CD8-positive, alpha-beta memory T cell (primary cell): ENCODE measurements at regions of chr10 and their contacts with region 1.

Region 1: GRCh38 chr10:87850742-87851205 is 12.6 kb downstream of the KLLN start:
- DNase-seq: peak; percentile 11 to 63 (median 43)
- H3K4me3 ChIP-seq: no peak overlapping the region
- H3K4me3 Mint-ChIP-seq: no peak overlapping the region
- H3K27ac ChIP-seq: no peak overlapping the region
- H3K27ac Mint-ChIP-seq: no peak overlapping the region
- H3K4me1 ChIP-seq: no peaks in the 10 kb centered on the region
- H3K4me1 Mint-ChIP-seq: peaks cover 5 to 12% (median 10%) of the 10 kb centered on the region in 3 donors
- H3K27me3 ChIP-seq: no peaks in the 10 kb centered on the region
- H3K27me3 Mint-ChIP-seq: peaks cover 0 to 3% of the 10 kb centered on the region in 2 donors

Region 2: GRCh38 chr10:88386821-88387773 is 536.3 kb after region 1 on chr10:
- CTCF ChIA-PET with region 1: interaction called, 25 read pairs
- POLR2A ChIA-PET with region 1: no interaction called
- DNase-seq: peak in 1 of 5 donors; percentile 53
- H3K4me3 ChIP-seq: peak overlapping the region; percentile 51
- H3K4me3 Mint-ChIP-seq: peak overlapping the region in 1 of 7 donors; percentile 9
- H3K27ac ChIP-seq: no peak overlapping the region
- H3K27ac Mint-ChIP-seq: peak overlapping the region in 1 of 8 donors; percentile 95
- H3K4me1 ChIP-seq: peaks cover 71% of the 10 kb centered on the region
- H3K4me1 Mint-ChIP-seq: peaks cover 7 to 27% (median 15%) of the 10 kb centered on the region in 3 donors
- H3K27me3 ChIP-seq: no peaks in the 10 kb centered on the region
- H3K27me3 Mint-ChIP-seq: no peaks in the 10 kb centered on the region

Region 3: DNA sequence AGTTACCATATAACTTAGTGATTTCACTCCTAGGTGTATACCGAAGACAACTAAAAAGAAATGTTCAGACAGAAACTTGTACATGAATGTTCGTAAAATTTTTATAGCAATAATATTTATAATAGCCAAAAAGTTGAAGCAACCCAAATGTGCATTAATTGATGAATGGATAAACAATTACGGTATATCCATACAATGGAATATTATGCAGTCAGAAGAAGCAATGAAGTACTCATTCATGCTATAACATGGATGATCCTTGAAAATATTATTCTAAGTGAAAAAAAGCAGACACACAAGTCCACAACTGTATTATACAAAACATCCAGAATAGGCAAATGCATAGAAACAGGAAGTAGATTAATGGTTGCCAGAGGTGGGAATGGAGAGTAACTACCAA is 548.5 kb after region 1 on chr10:
- CTCF ChIA-PET with region 1: no interaction called
- POLR2A ChIA-PET with region 1: no interaction called
- DNase-seq: no peak
- H3K4me3 ChIP-seq: no peak overlapping the region
- H3K4me3 Mint-ChIP-seq: no peak overlapping the region
- H3K27ac ChIP-seq: no peak overlapping the region
- H3K27ac Mint-ChIP-seq: no peak overlapping the region
- H3K4me1 ChIP-seq: no peaks in the 10 kb centered on the region
- H3K4me1 Mint-ChIP-seq: peaks cover 0 to 4% (median 0%) of the 10 kb centered on the region in 3 donors
- H3K27me3 ChIP-seq: no peaks in the 10 kb centered on the region
- H3K27me3 Mint-ChIP-seq: no peaks in the 10 kb centered on the region

Region 4: DNA sequence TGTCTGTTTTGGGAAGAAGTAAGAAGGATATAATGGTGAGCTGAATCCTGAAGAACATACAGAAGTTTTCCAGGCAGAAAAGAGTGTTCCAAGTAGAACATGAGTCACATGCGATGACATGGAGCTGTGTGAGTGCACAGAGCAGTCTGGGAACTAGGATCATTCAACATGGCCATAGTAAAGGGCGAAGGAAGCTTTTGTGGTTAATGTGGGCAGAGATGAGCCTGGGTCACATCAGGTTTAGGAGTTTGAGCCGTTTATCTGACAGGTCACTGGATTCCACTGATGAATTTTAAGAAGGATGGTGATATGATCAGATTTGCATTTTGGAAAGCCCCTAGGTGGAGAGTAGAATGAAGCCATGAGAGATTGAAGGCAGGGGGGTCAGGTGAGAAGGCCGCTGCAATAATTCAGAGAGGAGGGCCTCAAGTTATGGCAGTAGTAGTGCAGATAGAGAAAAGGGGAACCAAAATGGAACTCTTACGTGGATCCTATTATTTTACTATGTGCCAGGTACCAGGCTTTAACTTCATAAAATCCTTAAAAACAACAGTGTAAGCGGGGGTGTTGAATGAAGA is 561.1 kb after region 1 on chr10:
- CTCF ChIA-PET with region 1: no interaction called
- POLR2A ChIA-PET with region 1: no interaction called
- DNase-seq: no peak
- H3K4me3 ChIP-seq: no peak overlapping the region
- H3K4me3 Mint-ChIP-seq: no peak overlapping the region
- H3K27ac ChIP-seq: no peak overlapping the region
- H3K27ac Mint-ChIP-seq: no peak overlapping the region
- H3K4me1 ChIP-seq: no peaks in the 10 kb centered on the region
- H3K4me1 Mint-ChIP-seq: no peaks in the 10 kb centered on the region
- H3K27me3 ChIP-seq: no peaks in the 10 kb centered on the region
- H3K27me3 Mint-ChIP-seq: peaks cover 0 to 3% of the 10 kb centered on the region in 2 donors

Region 5: GRCh38 chr10:88553116-88553752 is 702.5 kb after region 1 on chr10:
- CTCF ChIA-PET with region 1: interaction called, 10 read pairs
- POLR2A ChIA-PET with region 1: no interaction called
- DNase-seq: peak in 3 of 5 donors; percentile 33 to 45 (median 39)
- H3K4me3 ChIP-seq: no peak overlapping the region
- H3K4me3 Mint-ChIP-seq: no peak overlapping the region
- H3K27ac ChIP-seq: no peak overlapping the region
- H3K27ac Mint-ChIP-seq: no peak overlapping the region
- H3K4me1 ChIP-seq: no peaks in the 10 kb centered on the region
- H3K4me1 Mint-ChIP-seq: no peaks in the 10 kb centered on the region
- H3K27me3 ChIP-seq: no peaks in the 10 kb centered on the region
- H3K27me3 Mint-ChIP-seq: no peaks in the 10 kb centered on the region